ENCODE measurements at regions of chr10 and their contacts with region 1.

Region 1: DNA sequence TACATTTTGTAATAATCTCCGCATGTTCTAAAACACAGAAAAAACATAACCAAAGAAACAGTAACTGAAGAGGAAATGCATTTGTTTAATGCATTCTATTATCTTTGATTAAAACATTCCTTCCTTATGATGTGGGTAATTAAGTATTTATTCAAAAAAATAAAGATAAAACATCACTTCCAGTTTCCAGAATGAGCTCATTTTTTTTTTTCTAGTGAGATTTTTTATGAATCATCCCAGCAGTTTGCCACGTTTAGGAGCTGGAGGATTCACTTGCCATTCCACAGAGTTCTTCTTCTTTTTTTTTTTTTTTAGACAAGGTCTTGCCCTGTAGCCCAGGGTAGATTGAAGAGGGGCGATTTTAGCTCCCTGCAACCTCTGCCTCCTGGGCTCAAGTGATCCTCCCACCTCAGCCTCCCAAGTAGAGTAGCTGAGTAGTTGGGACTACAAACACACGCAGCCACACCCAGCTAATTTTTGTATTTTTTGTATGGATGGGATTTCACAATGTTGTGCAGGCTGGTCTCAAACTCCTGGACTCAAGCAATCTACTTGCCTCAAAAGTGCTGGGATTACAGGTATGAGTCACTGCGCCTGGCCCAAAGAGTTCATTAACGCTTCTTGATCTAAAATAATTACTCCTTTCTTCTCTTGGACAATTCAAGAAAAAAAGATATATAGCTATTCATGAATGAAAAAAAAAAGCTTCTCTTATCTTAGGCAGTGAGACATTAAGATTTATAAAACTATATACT is 177.3 kb downstream of the DKK1 start:
- DNase-seq: no peak
- ATAC-seq: no peak
- H3K4me3 ChIP-seq: no peak overlapping the region
- H3K27ac ChIP-seq: no peak overlapping the region
- H3K4me1 ChIP-seq: no peaks in the 10 kb centered on the region
- H3K27me3 ChIP-seq: no peaks in the 10 kb centered on the region
- CTCF ChIP-seq: no peak
- POLR2A ChIP-seq: no peak

Region 2: GRCh38 chr10:52297747-52298146 is 193.7 kb before region 1 on chr10:
- intact Hi-C with region 1: loop called in 1 of 2 experiments (anchors 10 kb)
- DNase-seq: no peak
- ATAC-seq: no peak
- H3K4me3 ChIP-seq: no peak overlapping the region
- H3K27ac ChIP-seq: no peak overlapping the region
- H3K4me1 ChIP-seq: no peaks in the 10 kb centered on the region
- H3K27me3 ChIP-seq: no peaks in the 10 kb centered on the region
- CTCF ChIP-seq: no peak
- POLR2A ChIP-seq: no peak